ENCODE measurements at regions of chr7 and their contacts with region 1.

Region 1: DNA sequence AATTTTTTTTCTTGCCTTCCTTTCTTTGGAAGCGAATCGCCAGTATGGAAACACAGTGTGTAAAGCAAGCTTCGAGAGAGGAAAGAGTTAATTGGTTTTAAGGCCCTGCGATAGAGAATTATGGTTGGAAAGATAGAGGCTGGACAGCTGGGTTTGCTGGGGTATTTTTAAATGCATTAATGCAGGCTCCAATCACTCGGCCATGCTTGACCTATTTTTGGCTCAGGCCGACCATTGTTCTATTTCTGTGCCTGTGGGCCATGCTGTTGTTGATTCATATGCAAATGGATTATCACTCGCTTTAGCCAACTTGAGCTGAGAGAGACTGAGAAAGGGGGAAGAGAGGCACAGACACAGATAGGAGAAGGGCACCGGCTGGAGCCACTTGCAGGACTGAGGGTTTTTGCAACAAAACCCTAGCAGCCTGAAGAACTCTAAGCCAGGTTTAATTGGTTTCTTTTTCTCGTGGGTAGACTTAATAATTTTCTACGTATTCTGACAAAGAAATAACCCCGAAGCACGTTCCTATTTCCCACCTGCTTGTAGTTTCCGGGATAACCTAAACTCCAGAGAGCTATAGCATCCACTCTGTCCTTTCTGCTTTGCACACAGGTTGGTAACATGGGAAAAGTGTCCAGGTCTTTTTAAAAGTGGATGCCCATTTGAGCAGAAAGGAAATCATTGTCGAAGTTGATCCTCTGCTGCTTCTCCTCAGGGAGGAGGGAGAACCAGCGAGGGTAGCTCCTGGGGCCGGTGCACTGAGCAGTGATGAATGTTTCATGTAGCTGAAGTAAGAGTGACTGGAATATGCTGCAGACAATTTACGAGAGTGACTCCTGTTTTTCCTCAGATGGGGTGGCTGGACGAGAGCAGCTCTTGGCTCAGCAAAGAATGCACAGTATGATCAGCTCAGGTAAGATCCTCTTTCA is at the start of gene HDAC9:
- DNase-seq: peak; percentile 44 to 70
- ATAC-seq: peak; percentile 75
- H3K4me3 ChIP-seq: peak within 1 kb of the TSS; percentile 64 to 89
- H3K27ac ChIP-seq: peak within 1 kb of the TSS; percentile 83 to 100
- H3K4me1 ChIP-seq: peaks cover 0 to 16% of the 10 kb centered on the region in 2 donors
- H3K27me3 ChIP-seq: no peaks in the 10 kb centered on the region
- total RNA-seq, gene HDAC9: 51.4 to 122 TPM

Region 2: GRCh38 chr7:18276383-18276782 is 219.3 kb before region 1 on chr7:
- intact Hi-C with region 1: no loop called
- DNase-seq: no peak
- ATAC-seq: no peak
- H3K4me3 ChIP-seq: no peak overlapping the region
- H3K27ac ChIP-seq: no peak overlapping the region
- H3K4me1 ChIP-seq: no peaks in the 10 kb centered on the region
- H3K27me3 ChIP-seq: no peaks in the 10 kb centered on the region

Region 3: DNA sequence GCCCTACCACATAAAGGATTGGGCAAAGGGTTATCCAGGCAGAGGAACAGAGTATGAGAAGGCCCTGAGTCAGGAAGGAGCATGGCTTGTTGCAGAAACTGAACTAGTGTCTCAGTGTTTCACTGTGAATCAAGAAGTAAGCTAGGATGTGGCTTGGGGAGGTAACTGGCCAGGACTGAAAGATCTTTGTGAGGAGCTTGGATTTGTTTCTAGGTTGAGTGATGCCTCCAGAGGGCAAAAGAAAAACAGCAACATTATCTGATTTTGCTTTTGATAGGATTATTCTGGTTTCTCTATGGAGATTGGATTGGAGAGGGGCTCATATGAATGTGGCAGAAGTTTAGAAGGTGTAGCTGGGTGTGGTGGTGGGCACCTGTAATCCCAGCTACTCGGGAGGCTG is 138.0 kb before region 1 on chr7:
- intact Hi-C with region 1: loop called (anchors 2 to 5 kb)
- DNase-seq: no peak
- ATAC-seq: no peak
- H3K4me3 ChIP-seq: no peak overlapping the region
- H3K27ac ChIP-seq: no peak overlapping the region
- H3K4me1 ChIP-seq: peaks cover 0 to 1% of the 10 kb centered on the region in 2 donors
- H3K27me3 ChIP-seq: no peaks in the 10 kb centered on the region

Region 4: DNA sequence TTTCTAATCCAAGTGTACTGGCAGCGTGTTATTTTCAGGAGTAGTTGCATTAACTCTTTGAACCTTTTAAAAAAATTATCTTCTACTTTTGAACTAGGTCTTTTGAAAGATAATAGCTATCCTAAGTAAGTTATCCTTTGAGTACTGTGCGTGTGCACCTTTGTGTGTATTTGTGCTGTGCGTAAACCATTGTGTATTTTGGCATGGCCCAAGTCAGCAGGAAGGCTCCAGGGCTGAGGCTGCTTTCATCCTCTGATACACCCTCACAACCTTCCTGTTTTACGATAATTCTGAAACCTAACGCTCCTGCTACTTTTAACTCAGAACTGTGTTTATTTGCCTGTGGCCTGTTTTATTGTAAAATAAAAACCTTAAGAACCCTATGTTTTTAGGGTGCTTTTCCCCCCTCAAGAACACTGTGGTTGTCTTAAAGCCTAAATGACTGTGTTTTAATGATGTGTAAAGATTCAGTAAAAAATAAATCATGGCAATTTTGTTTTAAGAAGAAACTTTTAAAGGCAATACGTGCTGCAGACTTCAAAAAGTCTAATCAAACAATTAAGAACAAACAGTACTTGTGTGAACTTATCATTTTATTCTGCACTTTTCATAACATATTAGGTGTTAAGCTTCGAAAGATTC is 57.4 kb after region 1 on chr7:
- intact Hi-C with region 1: loop called in 1 of 2 experiments (anchors 5 kb)
- DNase-seq: no peak
- ATAC-seq: no peak
- H3K4me3 ChIP-seq: no peak overlapping the region
- H3K27ac ChIP-seq: peak overlapping the region in 1 of 2 donors; percentile 67
- H3K4me1 ChIP-seq: peaks cover 3 to 12% of the 10 kb centered on the region in 2 donors
- H3K27me3 ChIP-seq: no peaks in the 10 kb centered on the region

Region 5: GRCh38 chr7:18666107-18666728 is 170.5 kb after region 1 on chr7:
- intact Hi-C with region 1: loop called in 1 of 2 experiments (anchors 10 kb)
- DNase-seq: peak; percentile 87 to 91
- ATAC-seq: peak; percentile 88
- H3K4me3 ChIP-seq: no peak overlapping the region
- H3K27ac ChIP-seq: no peak overlapping the region
- H3K4me1 ChIP-seq: peaks cover 0 to 3% of the 10 kb centered on the region in 2 donors
- H3K27me3 ChIP-seq: no peaks in the 10 kb centered on the region